Activated CD4-positive, alpha-beta memory T cell treated with anti-CD3 and anti-CD28 coated beads for 36 hours (primary cell): ENCODE measurements at regions of chr22 and their contacts with region 1.

Region 1: GRCh38 chr22:21867528-21868266 is at the start of gene MAPK1:
- DNase-seq: peak; percentile 96
- H3K4me3 Mint-ChIP-seq: peak within 1 kb of the TSS; percentile 87
- H3K27ac Mint-ChIP-seq: peak within 1 kb of the TSS; percentile 98
- H3K4me1 Mint-ChIP-seq: peaks cover 37% of the 10 kb centered on the region
- H3K27me3 Mint-ChIP-seq: peaks cover 9% of the 10 kb centered on the region
- total RNA-seq, gene MAPK1: 70.2 to 75.6 TPM

Region 2: GRCh38 chr22:21760640-21761039 is 107.1 kb before region 1 on chr22:
- CTCF ChIA-PET with region 1: interaction called, 6 read pairs
- POLR2A ChIA-PET with region 1: interaction called, 9 read pairs
- intact Hi-C with region 1: loop called (anchors 1 kb)
- DNase-seq: no peak
- H3K4me3 Mint-ChIP-seq: no peak overlapping the region
- H3K27ac Mint-ChIP-seq: no peak overlapping the region
- H3K4me1 Mint-ChIP-seq: peaks cover 58% of the 10 kb centered on the region
- H3K27me3 Mint-ChIP-seq: peaks cover 4% of the 10 kb centered on the region

Region 3: GRCh38 chr22:21816787-21817496 is 50.8 kb before region 1 on chr22:
- CTCF ChIA-PET with region 1: interaction called, 3 read pairs
- POLR2A ChIA-PET with region 1: interaction called, 4 read pairs
- intact Hi-C with region 1: loop called (anchors 2 kb)
- DNase-seq: peak; percentile 35
- H3K4me3 Mint-ChIP-seq: peak overlapping the region; percentile 33
- H3K27ac Mint-ChIP-seq: peak overlapping the region; percentile 81
- H3K4me1 Mint-ChIP-seq: peaks cover 56% of the 10 kb centered on the region
- H3K27me3 Mint-ChIP-seq: no peaks in the 10 kb centered on the region

Region 4: DNA sequence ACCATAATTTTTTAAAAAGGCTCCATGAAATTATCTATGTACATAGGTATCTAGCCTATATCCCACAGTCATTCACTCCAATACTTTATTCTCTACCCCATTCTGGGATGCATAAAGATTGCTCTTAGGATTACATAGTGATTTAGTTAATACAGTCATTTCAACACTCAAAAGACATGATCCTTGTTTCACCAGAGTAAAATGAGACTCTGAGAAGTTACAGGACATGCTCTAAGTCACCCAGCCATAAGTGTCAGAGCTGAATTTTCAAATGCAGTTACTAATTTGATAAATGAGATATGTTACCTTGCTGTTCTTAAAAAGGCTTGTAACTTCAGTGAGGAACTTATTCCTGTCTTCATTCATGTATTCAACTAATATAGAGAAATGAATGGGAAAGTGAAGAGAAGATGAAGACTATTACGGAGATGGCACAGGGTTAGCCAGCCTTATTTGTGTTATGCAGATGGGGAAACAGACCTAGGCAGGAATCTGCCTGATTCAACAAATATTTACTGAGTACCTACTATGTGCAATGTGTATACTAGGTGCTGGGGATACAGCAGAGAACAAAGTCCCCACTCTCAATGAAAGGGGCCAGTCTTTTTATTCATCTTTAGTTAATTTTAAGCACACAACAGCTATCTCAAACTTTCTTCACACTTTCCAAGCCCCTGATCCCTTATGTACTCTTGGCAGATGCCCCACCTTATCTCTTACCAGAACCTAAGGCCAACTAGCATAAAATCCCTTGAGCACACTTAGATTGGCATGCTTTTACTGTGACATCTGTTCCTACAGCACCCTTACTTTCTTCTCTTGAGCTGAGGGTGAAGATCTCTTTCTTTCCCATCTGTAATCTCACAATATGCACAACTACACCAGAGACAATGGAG is 21.9 kb before region 1 on chr22:
- CTCF ChIA-PET with region 1: no interaction called
- POLR2A ChIA-PET with region 1: no interaction called
- intact Hi-C with region 1: no loop called
- DNase-seq: no peak
- H3K4me3 Mint-ChIP-seq: no peak overlapping the region
- H3K27ac Mint-ChIP-seq: no peak overlapping the region
- H3K4me1 Mint-ChIP-seq: peaks cover 46% of the 10 kb centered on the region
- H3K27me3 Mint-ChIP-seq: no peaks in the 10 kb centered on the region

Region 5: GRCh38 chr22:21857481-21857914 is 10.2 kb before region 1 on chr22:
- CTCF ChIA-PET with region 1: interaction called, 4 read pairs
- POLR2A ChIA-PET with region 1: interaction called, 6 read pairs
- intact Hi-C with region 1: loop called (anchors 1 kb)
- DNase-seq: no peak
- H3K4me3 Mint-ChIP-seq: no peak overlapping the region
- H3K27ac Mint-ChIP-seq: no peak overlapping the region
- H3K4me1 Mint-ChIP-seq: peaks cover 80% of the 10 kb centered on the region
- H3K27me3 Mint-ChIP-seq: no peaks in the 10 kb centered on the region

Region 6: DNA sequence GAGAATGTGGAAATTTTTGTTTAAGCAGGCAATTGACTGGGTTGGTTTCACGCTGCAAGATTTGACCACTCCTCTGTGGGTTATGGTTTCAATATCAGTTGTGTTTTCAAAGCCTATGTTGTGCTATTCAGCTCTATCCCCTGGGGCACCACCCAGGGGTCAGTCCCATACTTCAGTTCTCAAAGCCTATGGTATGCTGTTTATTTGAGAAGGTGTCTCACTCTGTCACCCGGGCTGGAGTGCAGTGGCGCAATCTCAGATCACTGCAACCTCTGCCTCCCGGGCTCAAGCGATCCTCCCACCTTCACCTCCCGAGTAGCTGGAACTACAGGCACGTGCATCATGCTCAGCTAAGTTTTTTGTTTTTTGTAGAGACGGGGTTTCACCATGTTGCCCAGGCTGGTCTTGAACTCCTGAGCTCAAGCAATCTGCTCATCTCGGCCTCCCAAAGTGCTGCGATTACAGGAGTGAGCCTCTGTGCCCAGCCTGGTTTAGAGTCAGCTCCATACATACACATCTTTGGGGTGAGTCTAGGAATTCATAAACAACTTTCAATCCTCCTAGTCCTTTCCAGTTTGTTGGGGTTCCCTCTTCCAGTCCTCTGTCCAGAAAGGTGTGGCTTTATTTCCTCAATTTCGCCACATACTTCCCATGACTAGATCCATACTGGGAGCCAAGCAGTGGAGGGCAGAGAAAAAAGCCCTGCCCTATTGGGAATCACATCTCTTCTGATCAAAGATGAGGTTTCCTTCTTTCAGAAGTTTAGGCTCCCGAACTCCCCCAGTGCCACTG is 34.8 kb after region 1 on chr22:
- CTCF ChIA-PET with region 1: no interaction called
- POLR2A ChIA-PET with region 1: no interaction called
- intact Hi-C with region 1: no loop called
- DNase-seq: no peak
- H3K4me3 Mint-ChIP-seq: no peak overlapping the region
- H3K27ac Mint-ChIP-seq: no peak overlapping the region
- H3K4me1 Mint-ChIP-seq: no peaks in the 10 kb centered on the region
- H3K27me3 Mint-ChIP-seq: no peaks in the 10 kb centered on the region

Region 7: GRCh38 chr22:22043296-22044078 is 175.8 kb after region 1 on chr22:
- CTCF ChIA-PET with region 1: no interaction called
- POLR2A ChIA-PET with region 1: no interaction called
- intact Hi-C with region 1: no loop called
- DNase-seq: no peak
- H3K4me3 Mint-ChIP-seq: no peak overlapping the region
- H3K27ac Mint-ChIP-seq: no peak overlapping the region
- H3K4me1 Mint-ChIP-seq: no peaks in the 10 kb centered on the region
- H3K27me3 Mint-ChIP-seq: peaks cover 9% of the 10 kb centered on the region